ENCODE measurements at regions of chr11 and their contacts with region 1.

Region 1: GRCh38 chr11:48001438-48002021 is 21.2 kb downstream of the PTPRJ start:
- DNase-seq: peak; percentile 87
- H3K4me3 Mint-ChIP-seq: peak overlapping the region; percentile 69
- H3K27ac Mint-ChIP-seq: peak overlapping the region; percentile 99
- H3K4me1 Mint-ChIP-seq: peaks cover 70% of the 10 kb centered on the region
- H3K27me3 Mint-ChIP-seq: no peaks in the 10 kb centered on the region

Region 2: GRCh38 chr11:47847892-47848635 is 153.5 kb before region 1 on chr11 and contains the start of gene NUP160:
- intact Hi-C with region 1: loop called (anchors 5 kb)
- DNase-seq: peak; percentile 85
- H3K4me3 Mint-ChIP-seq: peak within 1 kb of the TSS; percentile 97
- H3K27ac Mint-ChIP-seq: peak within 1 kb of the TSS; percentile 98
- H3K4me1 Mint-ChIP-seq: peaks cover 33% of the 10 kb centered on the region
- H3K27me3 Mint-ChIP-seq: no peaks in the 10 kb centered on the region
- total RNA-seq, gene NUP160: 81.2 and 84.7 TPM in 2 replicates

Region 3: GRCh38 chr11:47932544-47932943 is 69.0 kb before region 1 on chr11:
- intact Hi-C with region 1: loop called (anchors 10 kb)
- DNase-seq: no peak
- H3K4me3 Mint-ChIP-seq: no peak overlapping the region
- H3K27ac Mint-ChIP-seq: no peak overlapping the region
- H3K4me1 Mint-ChIP-seq: peaks cover 20% of the 10 kb centered on the region
- H3K27me3 Mint-ChIP-seq: no peaks in the 10 kb centered on the region

Region 4: DNA sequence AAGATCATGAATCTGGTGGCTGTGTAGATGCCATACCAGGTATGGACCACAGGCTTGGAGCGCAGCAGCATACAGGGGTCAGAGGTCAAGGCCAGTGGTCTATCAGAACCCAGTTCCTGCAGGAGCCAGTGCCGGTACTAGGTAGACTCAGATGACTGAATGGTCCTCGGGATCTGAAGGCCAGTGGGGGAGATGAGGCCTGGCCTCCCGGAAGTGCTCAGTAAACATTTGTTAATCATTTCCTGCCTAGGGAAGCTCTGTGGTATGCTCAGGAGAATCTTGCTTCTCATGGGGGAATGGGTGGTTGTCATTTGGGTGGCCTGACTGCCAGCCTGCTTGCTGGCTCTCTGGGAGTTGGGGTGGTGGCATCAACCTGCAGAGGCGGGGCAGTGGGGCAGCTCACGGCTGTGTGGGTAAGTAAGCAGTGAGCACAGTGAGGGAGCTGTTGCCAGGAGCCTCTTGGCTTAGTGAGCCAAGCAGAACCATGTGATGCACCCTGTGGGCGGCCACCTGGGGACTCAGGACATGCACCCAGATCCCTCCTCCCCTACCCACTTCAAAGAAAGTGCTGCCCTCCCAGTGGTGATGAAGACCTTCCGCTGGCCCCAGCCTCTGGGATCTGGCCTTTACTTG is 11.9 kb after region 1 on chr11:
- intact Hi-C with region 1: loop called (anchors 1 kb)
- DNase-seq: no peak
- H3K4me3 Mint-ChIP-seq: peak overlapping the region; percentile 61
- H3K27ac Mint-ChIP-seq: peak overlapping the region; percentile 97
- H3K4me1 Mint-ChIP-seq: peaks cover 82% of the 10 kb centered on the region
- H3K27me3 Mint-ChIP-seq: no peaks in the 10 kb centered on the region

Region 5: DNA sequence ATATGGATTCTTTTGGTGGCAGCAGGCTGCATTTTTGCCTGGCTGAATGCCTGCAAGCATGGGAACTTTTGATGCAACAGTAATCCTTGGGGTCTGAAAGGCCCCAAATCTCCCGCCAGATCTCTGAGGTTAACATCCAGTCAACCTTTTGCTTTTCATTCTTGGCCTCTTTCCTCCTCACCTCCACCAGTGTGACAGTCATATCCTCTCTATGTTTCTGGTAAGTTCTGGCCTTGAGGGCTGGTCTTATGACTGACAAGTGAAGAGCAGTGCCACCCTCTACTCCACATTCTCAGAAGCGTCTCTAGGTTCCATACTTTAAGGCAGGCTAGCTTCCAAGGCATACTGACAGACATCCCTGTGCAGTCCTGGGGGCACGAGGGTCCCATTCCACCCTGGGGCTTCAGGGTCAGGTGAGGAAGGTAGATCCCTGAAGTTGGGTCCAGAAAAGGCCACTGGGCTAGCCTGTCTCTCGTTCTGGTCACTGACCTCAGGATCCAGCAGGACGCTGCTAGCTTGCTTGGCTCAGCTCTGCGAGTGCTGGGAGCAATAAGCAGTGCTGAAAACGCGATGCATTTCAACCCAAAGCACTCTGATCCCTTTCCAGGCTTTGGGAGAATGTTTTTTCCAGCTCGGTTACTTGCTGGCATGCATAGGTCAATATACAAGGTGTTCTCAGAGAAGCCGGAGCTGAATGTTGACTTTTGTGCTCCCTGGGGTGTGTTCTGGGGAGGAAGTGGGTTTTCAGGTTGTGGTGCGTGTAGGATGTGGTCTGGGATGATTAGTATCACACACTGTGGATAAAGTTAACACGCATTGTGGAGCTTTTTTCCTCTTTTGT is 54.0 kb after region 1 on chr11:
- intact Hi-C with region 1: loop called (anchors 1 kb)
- DNase-seq: peak; percentile 83
- H3K4me3 Mint-ChIP-seq: peak overlapping the region; percentile 23
- H3K27ac Mint-ChIP-seq: peak overlapping the region; percentile 91
- H3K4me1 Mint-ChIP-seq: peaks cover 80% of the 10 kb centered on the region
- H3K27me3 Mint-ChIP-seq: no peaks in the 10 kb centered on the region

Region 6: GRCh38 chr11:48109046-48109666 is 107.6 kb after region 1 on chr11:
- intact Hi-C with region 1: loop called (anchors 1 kb)
- DNase-seq: no peak
- H3K4me3 Mint-ChIP-seq: peak overlapping the region; percentile 0
- H3K27ac Mint-ChIP-seq: peak overlapping the region; percentile 78
- H3K4me1 Mint-ChIP-seq: peaks cover 44% of the 10 kb centered on the region
- H3K27me3 Mint-ChIP-seq: no peaks in the 10 kb centered on the region

Measured in activated T-helper 2 cell treated with anti-CD3 and anti-CD28 coated beads, Interferon-gamma antibody, Interleukin-2, Interleukin-4, amounts not matched to agents 10 μg/mL and 5 μg/mL and 100 μg/mL, durations not matched to agents 14 hours and 24 hours and 36 hours (primary cell).